ENCODE measurements at regions of chr16 and their contacts with region 1.

Region 1: DNA sequence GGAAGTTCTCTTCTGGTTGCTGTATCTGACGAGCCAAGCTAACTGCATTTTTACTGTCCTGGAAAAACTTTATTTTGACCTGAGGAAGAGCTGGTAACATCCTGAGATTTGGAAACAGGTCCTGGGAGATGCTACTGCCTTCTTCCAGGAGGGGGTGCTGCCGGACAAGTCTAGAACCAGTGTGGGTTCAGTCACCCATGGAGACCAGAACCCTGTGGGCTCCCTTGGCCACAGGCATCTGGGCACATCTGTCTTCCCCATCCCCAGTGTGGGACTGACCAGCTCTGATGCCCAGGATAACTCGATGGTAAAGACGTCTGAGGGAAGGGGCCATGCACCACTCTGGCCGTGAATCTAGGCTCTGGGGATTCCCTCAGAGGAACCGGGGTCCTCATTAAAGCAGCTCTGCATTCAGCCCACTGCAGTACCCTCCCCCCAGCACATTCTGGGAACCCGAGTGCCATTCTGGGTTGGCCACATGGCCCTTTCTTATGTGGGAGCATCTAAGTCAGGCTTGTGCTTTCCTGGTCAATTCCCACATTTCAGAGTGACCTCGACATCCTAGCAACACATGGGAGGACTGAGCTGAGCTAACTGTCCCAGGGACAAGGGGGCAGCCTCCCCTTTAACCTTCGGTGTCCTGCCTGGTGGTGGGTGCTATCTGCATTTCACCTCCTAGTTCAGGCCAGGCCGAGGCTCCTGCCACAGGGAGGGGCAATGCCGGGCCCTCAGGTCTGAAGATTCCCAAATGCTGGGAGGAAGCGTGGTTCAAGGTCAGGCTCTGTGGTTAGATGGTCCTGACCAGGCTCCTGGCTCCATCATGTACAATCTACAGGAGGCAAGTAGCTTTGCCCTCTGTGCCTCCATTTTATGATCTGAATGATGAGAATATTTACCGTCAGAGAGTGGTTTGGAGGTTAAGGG is 6.4 kb downstream of the C16orf86 start:
- DNase-seq: peak; percentile 71
- H3K4me3 Mint-ChIP-seq: no peak overlapping the region
- H3K27ac Mint-ChIP-seq: peak overlapping the region; percentile 31
- H3K4me1 Mint-ChIP-seq: peaks cover 13% of the 10 kb centered on the region
- H3K27me3 Mint-ChIP-seq: no peaks in the 10 kb centered on the region
- CTCF ChIP-seq: peak; percentile 60

Region 2: DNA sequence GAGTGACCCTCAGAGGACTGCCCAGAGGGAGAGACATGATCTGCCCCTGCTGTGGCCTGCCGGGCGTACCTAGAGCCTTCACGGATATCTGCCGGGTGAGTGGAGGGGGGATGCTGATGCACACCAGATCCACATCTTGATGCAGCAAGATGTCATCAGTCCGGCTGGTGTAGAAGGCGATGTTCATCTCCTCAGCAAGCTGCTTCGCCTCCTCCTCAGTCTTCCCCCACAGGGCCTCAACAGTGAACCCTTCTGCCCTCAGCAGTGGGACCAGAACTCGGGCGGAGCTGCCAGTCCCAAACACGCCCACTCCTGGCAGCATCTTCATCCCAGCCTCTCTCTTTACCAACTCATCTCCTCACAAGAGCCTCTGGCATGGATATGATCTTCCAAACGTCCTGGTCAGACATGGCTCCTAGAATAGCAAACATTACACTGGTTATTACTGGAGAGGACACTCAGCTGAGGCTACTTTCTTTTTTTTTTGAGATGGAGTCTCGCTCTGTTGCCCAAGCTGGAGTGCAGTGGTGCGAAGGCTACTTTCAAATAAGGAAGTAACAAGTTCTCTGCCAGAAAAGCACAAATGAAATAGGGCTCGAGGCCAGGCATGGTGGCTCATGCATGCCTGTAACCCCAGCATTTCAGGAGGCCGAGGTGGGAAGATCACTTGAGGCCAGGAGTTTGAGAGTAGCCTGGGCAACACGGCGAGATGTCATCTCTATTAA is 12.5 kb after region 1 on chr16:
- CTCF ChIA-PET with region 1: no interaction called
- intact Hi-C with region 1: no loop called
- DNase-seq: no peak
- H3K4me3 Mint-ChIP-seq: no peak overlapping the region
- H3K27ac Mint-ChIP-seq: no peak overlapping the region
- H3K4me1 Mint-ChIP-seq: no peaks in the 10 kb centered on the region
- H3K27me3 Mint-ChIP-seq: no peaks in the 10 kb centered on the region
- CTCF ChIP-seq: no peak

Region 3: DNA sequence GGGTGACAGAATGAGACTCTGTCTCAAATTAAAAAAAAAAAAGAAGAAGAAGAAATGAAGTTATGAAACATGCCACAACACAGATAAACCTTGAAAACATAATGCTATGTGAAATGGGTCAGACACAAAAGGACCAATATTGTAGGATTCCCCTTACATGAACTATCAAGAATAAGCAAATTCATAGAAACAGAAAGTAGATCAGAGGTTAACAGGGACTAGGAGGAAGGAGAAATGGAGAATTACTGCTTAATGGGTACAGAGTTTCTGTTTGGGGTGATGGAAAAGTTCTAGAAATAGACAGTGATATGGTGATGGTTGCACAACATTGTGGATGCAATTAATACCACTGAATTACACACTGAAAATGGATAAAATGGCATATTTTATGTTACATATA is 117.1 kb after region 1 on chr16:
- CTCF ChIA-PET with region 1: no interaction called
- intact Hi-C with region 1: no loop called
- DNase-seq: no peak
- H3K4me3 Mint-ChIP-seq: no peak overlapping the region
- H3K27ac Mint-ChIP-seq: no peak overlapping the region
- H3K4me1 Mint-ChIP-seq: no peaks in the 10 kb centered on the region
- H3K27me3 Mint-ChIP-seq: no peaks in the 10 kb centered on the region
- CTCF ChIP-seq: no peak

Region 4: DNA sequence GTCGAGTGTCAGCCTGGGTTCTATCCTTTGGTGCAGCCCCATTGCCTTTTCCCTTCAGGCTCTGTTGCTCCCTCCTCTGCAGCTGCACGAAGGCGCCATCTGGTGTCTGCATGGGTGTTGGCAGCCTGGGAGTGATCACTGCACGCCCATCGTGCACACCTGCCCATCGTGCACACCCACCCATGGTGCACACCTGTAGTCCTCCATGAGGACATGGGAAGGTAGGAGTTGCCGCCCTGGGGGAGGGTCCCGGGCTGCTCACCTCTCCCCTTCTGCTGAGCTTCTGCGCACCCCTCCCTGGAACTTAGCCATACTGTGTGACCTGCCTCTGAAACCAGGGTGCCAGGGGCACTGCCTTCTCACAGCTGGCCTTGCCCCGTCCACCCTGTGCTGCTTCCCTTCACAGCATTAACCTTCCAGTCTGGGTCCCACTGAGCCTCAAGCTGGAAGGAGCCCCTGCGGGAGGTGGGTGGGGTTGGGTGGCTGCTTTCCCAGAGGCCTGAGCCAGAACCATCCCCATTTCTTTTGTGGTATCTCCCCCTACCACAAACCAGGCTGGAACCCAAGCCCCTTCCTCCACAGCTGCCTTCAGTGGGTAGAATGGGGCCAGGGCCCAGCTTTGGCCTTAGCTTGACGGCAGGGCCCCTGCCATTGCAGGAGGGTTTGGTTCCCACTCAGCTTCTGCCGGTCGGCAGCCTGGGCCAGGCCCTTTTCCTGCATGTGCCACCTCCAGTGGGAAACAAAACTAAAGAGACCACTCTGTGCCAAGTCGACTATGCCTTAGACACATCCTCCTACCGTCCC is 255.8 kb after region 1 on chr16:
- CTCF ChIA-PET with region 1: interaction called, 3 read pairs
- intact Hi-C with region 1: loop called (anchors 2 kb)
- DNase-seq: peak; percentile 86
- H3K4me3 Mint-ChIP-seq: no peak overlapping the region
- H3K27ac Mint-ChIP-seq: no peak overlapping the region
- H3K4me1 Mint-ChIP-seq: no peaks in the 10 kb centered on the region
- H3K27me3 Mint-ChIP-seq: no peaks in the 10 kb centered on the region
- CTCF ChIP-seq: peak; percentile 83